Natural killer cell (primary cell): ENCODE measurements at regions of chr12 and their contacts with region 1.

Region 1: GRCh38 chr12:27733052-27733656 is 22.5 kb downstream of the MRPS35 start:
- DNase-seq: peak in 1 of 2 donors; percentile 65
- ATAC-seq: peak in 2 of 3 donors; percentile 69 to 75
- H3K4me3 ChIP-seq: no peak overlapping the region
- H3K4me3 Mint-ChIP-seq: no peak overlapping the region
- H3K27ac ChIP-seq: no peak overlapping the region
- H3K27ac Mint-ChIP-seq: no peak overlapping the region
- H3K4me1 ChIP-seq: no peaks in the 10 kb centered on the region
- H3K4me1 Mint-ChIP-seq: no peaks in the 10 kb centered on the region
- H3K27me3 ChIP-seq: no peaks in the 10 kb centered on the region
- H3K27me3 Mint-ChIP-seq: no peaks in the 10 kb centered on the region
- CTCF ChIP-seq: no peak

Region 2: DNA sequence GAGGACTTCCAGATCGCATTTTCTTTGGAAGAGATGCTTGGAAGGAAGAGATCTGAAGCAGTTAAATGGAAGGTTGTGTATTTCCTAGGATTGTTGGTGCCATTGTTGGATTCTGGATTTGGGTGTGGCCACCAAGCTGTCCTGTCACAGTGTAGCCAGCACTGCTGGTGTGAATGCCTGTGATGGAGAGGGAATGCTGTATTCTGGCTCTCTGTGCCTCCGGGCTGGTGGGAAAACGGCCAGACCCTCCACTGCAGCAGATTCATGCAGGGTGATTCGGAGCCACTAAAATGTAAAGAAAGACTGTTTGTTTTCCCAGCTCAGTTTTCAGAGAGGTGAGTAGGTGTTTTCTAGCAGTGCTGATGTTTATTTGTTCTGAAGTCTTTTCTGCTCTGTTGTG is 77.6 kb after region 1 on chr12:
- intact Hi-C with region 1: no loop called
- DNase-seq: no peak
- ATAC-seq: no peak
- H3K4me3 ChIP-seq: no peak overlapping the region
- H3K4me3 Mint-ChIP-seq: no peak overlapping the region
- H3K27ac ChIP-seq: no peak overlapping the region
- H3K27ac Mint-ChIP-seq: no peak overlapping the region
- H3K4me1 ChIP-seq: peaks cover 10% of the 10 kb centered on the region
- H3K4me1 Mint-ChIP-seq: peaks cover 0 to 11% of the 10 kb centered on the region in 2 donors
- H3K27me3 ChIP-seq: no peaks in the 10 kb centered on the region
- H3K27me3 Mint-ChIP-seq: peaks cover 11 to 27% of the 10 kb centered on the region in 2 donors
- CTCF ChIP-seq: no peak

Region 3: GRCh38 chr12:27821259-27821973 is 88.3 kb after region 1 on chr12:
- intact Hi-C with region 1: loop called (anchors 1 kb)
- DNase-seq: peak in 1 of 2 donors; percentile 79
- ATAC-seq: peak in 2 of 3 donors; percentile 45 to 71
- H3K4me3 ChIP-seq: no peak overlapping the region
- H3K4me3 Mint-ChIP-seq: no peak overlapping the region
- H3K27ac ChIP-seq: no peak overlapping the region
- H3K27ac Mint-ChIP-seq: no peak overlapping the region
- H3K4me1 ChIP-seq: peaks cover 3% of the 10 kb centered on the region
- H3K4me1 Mint-ChIP-seq: peaks cover 0 to 4% of the 10 kb centered on the region in 2 donors
- H3K27me3 ChIP-seq: no peaks in the 10 kb centered on the region
- H3K27me3 Mint-ChIP-seq: peaks cover 4 to 34% of the 10 kb centered on the region in 2 donors
- CTCF ChIP-seq: peak; percentile 76

Region 4: GRCh38 chr12:27940756-27941402 is 207.7 kb after region 1 on chr12:
- intact Hi-C with region 1: loop called (anchors 2 kb)
- DNase-seq: peak; percentile 16 to 79
- ATAC-seq: peak in 2 of 3 donors; percentile 63 to 68
- H3K4me3 ChIP-seq: no peak overlapping the region
- H3K4me3 Mint-ChIP-seq: no peak overlapping the region
- H3K27ac ChIP-seq: no peak overlapping the region
- H3K27ac Mint-ChIP-seq: no peak overlapping the region
- H3K4me1 ChIP-seq: no peaks in the 10 kb centered on the region
- H3K4me1 Mint-ChIP-seq: no peaks in the 10 kb centered on the region
- H3K27me3 ChIP-seq: no peaks in the 10 kb centered on the region
- H3K27me3 Mint-ChIP-seq: peaks cover 0 to 4% of the 10 kb centered on the region in 2 donors
- CTCF ChIP-seq: peak; percentile 29